ENCODE measurements at regions of chr3 and their contacts with region 1.

Region 1: DNA sequence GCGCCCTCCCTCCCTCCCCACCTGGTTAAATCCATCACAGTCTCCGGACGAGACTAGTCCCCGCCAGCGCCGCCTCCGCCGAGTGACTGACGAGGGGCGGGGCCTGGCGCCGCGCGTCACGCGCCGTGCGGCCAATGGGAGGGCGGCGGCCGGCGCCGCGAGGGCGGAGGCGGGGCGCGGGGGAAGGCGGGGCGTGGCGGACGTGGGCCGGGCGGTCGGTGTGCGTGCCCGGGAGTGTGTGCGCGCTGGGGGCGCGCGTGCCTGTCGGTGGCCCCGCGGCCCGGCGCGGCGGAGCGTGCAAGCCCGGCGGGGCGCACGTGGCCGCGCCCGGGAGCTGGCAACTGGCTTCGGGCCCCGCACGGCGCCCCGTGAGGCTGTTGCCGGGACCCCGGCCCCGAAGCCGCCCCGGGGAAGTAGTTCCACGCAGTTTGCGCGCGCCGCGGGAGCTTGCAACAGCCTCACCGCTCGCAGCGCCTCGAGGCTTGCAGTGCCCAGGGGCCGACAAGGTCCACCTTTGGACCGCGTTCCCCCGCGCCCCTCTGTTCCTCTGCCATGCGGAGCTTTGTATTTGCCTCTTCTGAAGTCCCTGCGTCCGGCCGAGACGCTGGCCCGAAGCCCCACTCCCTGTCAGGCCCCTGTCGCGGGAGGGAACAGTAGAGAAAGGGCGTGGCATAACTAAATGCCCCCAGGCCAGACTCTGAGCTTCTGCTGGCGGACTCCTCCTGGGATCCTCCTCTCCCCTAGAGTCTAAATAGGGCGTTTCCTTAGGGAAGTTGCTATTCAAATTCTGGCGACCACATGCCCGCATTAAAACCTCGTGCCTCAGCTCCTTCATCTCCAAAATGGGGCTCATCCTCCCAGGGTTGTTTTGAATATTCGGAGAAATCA is 400.9 kb downstream of the SHQ1 start:
- DNase-seq: peak; percentile 86
- ATAC-seq: peak; percentile 99
- H3K4me3 ChIP-seq: peak overlapping the region; percentile 98
- H3K27ac ChIP-seq: peak overlapping the region; percentile 84
- H3K4me1 ChIP-seq: peaks cover 2% of the 10 kb centered on the region; the same call in 1 of the 2 replicates
- H3K27me3 ChIP-seq: peaks cover 17% of the 10 kb centered on the region
- CTCF ChIP-seq: no peak
- POLR2A ChIP-seq: 0 out of 2 replicates have a peak, but pooled peaks have one; percentile 25
- RAD21 ChIP-seq: no peak

Region 2: DNA sequence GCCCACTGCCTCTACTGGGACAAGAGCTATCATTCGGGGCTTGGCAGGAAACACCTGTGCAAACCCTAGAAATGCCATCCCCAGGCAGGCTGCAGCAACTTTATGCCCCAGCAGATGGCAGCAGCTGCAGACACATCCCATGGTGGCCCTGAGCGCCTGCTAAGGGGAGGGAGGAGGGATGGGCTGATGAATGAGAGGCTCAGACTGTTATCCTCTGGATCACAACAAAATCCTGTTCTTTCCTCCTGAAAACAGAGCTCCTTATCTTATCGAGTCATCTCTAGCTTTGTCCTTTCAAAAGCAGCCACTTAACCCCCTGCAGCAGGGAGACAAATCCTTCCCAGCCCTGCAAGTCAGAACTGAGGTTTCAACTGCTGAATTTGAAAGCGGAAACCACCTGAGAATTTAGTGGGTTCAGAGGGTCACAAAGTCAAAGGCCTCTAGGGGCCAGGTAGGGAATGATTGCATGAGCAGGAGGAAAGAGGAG is 571.8 kb before region 1 on chr3:
- CTCF ChIA-PET with region 1: no interaction called
- POLR2A ChIA-PET with region 1: no interaction called
- dilution Hi-C with region 1: no loop called
- in situ Hi-C with region 1: no loop called
- intact Hi-C with region 1: loop called (anchors 5 kb)
- DNase-seq: peak; percentile 53
- ATAC-seq: peak; percentile 99
- H3K4me3 ChIP-seq: no peak overlapping the region
- H3K27ac ChIP-seq: no peak overlapping the region
- H3K4me1 ChIP-seq: no peaks in the 10 kb centered on the region
- H3K27me3 ChIP-seq: peaks cover 6% of the 10 kb centered on the region
- CTCF ChIP-seq: peak; percentile 81
- POLR2A ChIP-seq: 0 out of 2 replicates have a peak, but pooled peaks have one; percentile 27
- RAD21 ChIP-seq: peak; percentile 84

Region 3: DNA sequence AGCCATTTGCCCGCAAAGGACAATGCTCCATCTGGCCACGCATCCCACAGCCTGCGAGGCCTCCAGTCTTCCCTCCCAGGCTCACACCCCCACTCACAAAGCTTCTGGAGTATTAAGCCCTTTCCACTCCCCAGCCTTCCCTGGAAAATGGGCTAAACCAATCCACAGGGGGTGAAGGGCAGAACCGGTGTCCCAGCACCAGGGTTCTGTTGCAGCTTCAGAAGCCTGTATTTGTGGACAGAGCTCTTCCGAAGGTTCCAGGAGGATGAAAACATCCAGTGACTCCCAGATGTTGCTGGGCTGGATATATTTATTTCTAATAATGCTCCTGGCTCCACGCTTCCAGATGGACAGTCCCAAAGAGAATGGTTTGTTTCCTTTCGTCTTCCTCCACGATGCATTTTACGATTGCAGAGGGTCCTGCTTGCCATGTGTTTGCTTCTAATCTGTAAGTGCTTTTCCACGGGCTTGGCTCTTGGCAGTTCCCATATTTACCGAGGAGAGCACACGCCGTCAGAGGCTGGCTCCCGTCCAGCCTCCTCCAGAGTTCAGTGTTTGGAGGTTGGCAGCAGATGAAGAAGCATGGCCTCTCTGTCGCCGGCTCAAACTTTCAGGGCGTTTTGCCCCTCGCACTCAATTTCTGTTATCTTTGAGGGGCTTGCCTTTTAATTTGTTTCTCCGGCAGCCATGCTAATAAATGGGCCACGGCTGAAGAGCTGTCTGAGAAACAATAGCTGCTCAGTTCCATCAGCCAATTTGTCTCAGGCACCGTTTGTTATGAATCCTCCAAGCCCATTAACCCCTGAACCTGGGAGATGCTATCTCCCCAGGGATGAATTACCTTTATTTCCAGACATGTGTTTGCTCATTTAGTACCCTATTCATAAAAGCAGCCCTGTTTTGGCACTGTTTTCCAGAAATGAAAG is 294.5 kb before region 1 on chr3:
- CTCF ChIA-PET with region 1: no interaction called
- POLR2A ChIA-PET with region 1: no interaction called
- dilution Hi-C with region 1: no loop called
- in situ Hi-C with region 1: no loop called
- intact Hi-C with region 1: loop called (anchors 10 kb)
- DNase-seq: peak; percentile 69
- ATAC-seq: peak; percentile 40; the same call in 1 of the 2 replicates
- H3K4me3 ChIP-seq: peak overlapping the region; percentile 29
- H3K27ac ChIP-seq: peak overlapping the region; percentile 19; the same call in 1 of the 2 replicates
- H3K4me1 ChIP-seq: peaks cover 1% of the 10 kb centered on the region; the same call in 1 of the 2 replicates
- H3K27me3 ChIP-seq: peaks cover 3% of the 10 kb centered on the region; the same call in 1 of the 2 replicates
- CTCF ChIP-seq: no peak
- POLR2A ChIP-seq: no peak
- RAD21 ChIP-seq: no peak

Region 4: GRCh38 chr3:72405943-72406566 is 41.2 kb before region 1 on chr3:
- CTCF ChIA-PET with region 1: no interaction called
- POLR2A ChIA-PET with region 1: no interaction called
- dilution Hi-C with region 1: no loop called
- in situ Hi-C with region 1: no loop called
- intact Hi-C with region 1: no loop called
- DNase-seq: no peak
- ATAC-seq: no peak
- H3K4me3 ChIP-seq: no peak overlapping the region
- H3K27ac ChIP-seq: no peak overlapping the region
- H3K4me1 ChIP-seq: peaks cover 1% of the 10 kb centered on the region; the same call in 1 of the 2 replicates
- H3K27me3 ChIP-seq: no peaks in the 10 kb centered on the region
- CTCF ChIP-seq: no peak
- POLR2A ChIP-seq: no peak
- RAD21 ChIP-seq: no peak

Region 5: GRCh38 chr3:72591522-72592421 is 144.5 kb after region 1 on chr3:
- CTCF ChIA-PET with region 1: no interaction called
- POLR2A ChIA-PET with region 1: no interaction called
- dilution Hi-C with region 1: no loop called
- in situ Hi-C with region 1: no loop called
- intact Hi-C with region 1: loop called (anchors 5 kb)
- DNase-seq: peak; percentile 69
- ATAC-seq: peak; percentile 77
- H3K4me3 ChIP-seq: no peak overlapping the region
- H3K27ac ChIP-seq: no peak overlapping the region
- H3K4me1 ChIP-seq: peaks cover 3% of the 10 kb centered on the region
- H3K27me3 ChIP-seq: no peaks in the 10 kb centered on the region
- CTCF ChIP-seq: no peak
- POLR2A ChIP-seq: no peak
- RAD21 ChIP-seq: no peak; the same call in 1 of the 2 replicates

Region 6: DNA sequence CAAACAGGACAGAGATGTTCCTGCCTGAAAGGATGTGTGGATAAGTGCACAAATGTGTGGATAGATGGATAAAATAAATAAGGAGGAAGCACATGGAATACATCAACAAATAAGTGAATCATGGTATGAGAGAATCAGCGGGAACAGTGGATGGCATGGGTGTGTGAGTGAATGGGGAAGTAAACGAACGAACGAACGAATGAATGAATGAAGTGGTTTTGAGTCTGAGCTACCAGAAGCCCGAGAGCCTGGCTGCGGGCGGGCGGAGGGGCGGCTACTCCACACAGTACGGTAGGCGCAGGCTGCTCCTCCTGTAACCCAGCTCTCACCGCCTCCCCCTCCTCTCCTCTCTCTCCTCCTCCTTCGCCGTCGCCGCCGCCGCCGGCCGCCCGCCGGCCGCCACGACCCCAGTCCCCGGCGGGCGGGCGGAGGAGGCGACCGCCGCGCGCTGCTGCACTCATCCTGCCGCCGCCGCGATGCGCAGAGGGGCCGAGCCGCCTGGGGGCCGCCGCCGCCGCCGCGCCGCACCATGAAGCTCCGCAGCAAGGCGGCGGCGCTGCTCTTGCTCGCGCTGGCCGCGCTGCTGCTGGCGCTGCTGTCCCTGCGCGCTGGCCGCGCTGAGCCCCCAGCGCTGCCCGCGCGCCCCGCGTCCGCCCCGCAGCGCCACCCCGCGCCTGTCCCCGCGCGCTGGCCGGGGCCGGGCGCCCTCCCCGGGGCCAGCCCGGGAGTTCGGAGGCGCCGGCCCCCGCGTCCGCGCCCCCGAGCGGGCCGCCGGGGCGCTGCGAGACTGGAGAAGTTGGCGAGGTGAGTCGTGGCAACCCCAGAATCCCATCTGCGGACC is 440.6 kb after region 1 on chr3 and contains the start of gene GXYLT2:
- CTCF ChIA-PET with region 1: no interaction called
- POLR2A ChIA-PET with region 1: no interaction called
- dilution Hi-C with region 1: no loop called
- in situ Hi-C with region 1: no loop called
- intact Hi-C with region 1: loop called (anchors 5 kb)
- DNase-seq: peak; percentile 71
- ATAC-seq: peak; percentile 78
- H3K4me3 ChIP-seq: peak within 1 kb of the TSS; percentile 53
- H3K27ac ChIP-seq: peak within 1 kb of the TSS; percentile 76
- H3K4me1 ChIP-seq: peaks cover 21% of the 10 kb centered on the region
- H3K27me3 ChIP-seq: no peaks in the 10 kb centered on the region
- CTCF ChIP-seq: 0 out of 2 replicates have a peak, but pooled peaks have one; percentile 12
- POLR2A ChIP-seq: no peak
- RAD21 ChIP-seq: no peak
- total RNA-seq, gene GXYLT2: 11.1 and 11.4 TPM in 2 replicates

Measured in IMR-90 (cell line).